HEK293 (cell line): ENCODE measurements at regions of chr4 and their contacts with region 1.

Region 1: GRCh38 chr4:101187841-101188240 is 159.5 kb downstream of the PPP3CA start:
- H3K4me3 ChIP-seq: no peak overlapping the region
- H3K27ac ChIP-seq: no peak overlapping the region
- H3K4me1 ChIP-seq: 0 out of 2 replicates have a peak, but pooled peaks cover 4% of the 10 kb centered on the region
- CTCF ChIP-seq: no peak

Region 2: GRCh38 chr4:101393250-101393649 is 205.4 kb after region 1 on chr4:
- CTCF ChIA-PET with region 1: no interaction called
- POLR2A ChIA-PET with region 1: no interaction called
- H3K4me3 ChIP-seq: no peak overlapping the region
- H3K27ac ChIP-seq: no peak overlapping the region
- H3K4me1 ChIP-seq: no peaks in the 10 kb centered on the region
- CTCF ChIP-seq: no peak

Region 3: GRCh38 chr4:101411935-101412334 is 224.1 kb after region 1 on chr4:
- CTCF ChIA-PET with region 1: no interaction called
- POLR2A ChIA-PET with region 1: no interaction called
- H3K4me3 ChIP-seq: no peak overlapping the region
- H3K27ac ChIP-seq: no peak overlapping the region
- H3K4me1 ChIP-seq: no peaks in the 10 kb centered on the region
- CTCF ChIP-seq: no peak

Region 4: GRCh38 chr4:102843273-102843672 is 1655.4 kb after region 1 on chr4:
- CTCF ChIA-PET with region 1: interaction called, 10 read pairs
- POLR2A ChIA-PET with region 1: no interaction called
- H3K4me3 ChIP-seq: no peak overlapping the region
- H3K27ac ChIP-seq: no peak overlapping the region
- H3K4me1 ChIP-seq: no peaks in the 10 kb centered on the region
- CTCF ChIP-seq: no peak